ENCODE measurements at regions of chr7 and their contacts with region 1.

Region 1: GRCh38 chr7:87152107-87152844 is at the start of gene DMTF1:
- DNase-seq: peak; percentile 88
- H3K4me3 Mint-ChIP-seq: peak within 1 kb of the TSS; percentile 94
- H3K27ac Mint-ChIP-seq: peak within 1 kb of the TSS; percentile 93
- H3K4me1 Mint-ChIP-seq: peaks cover 43% of the 10 kb centered on the region
- H3K27me3 Mint-ChIP-seq: no peaks in the 10 kb centered on the region
- total RNA-seq, gene DMTF1: 95.3 to 97.8 TPM

Region 2: GRCh38 chr7:86889501-86889900 is 262.8 kb before region 1 on chr7:
- CTCF ChIA-PET with region 1: no interaction called
- POLR2A ChIA-PET with region 1: no interaction called
- DNase-seq: no peak
- H3K4me3 Mint-ChIP-seq: no peak overlapping the region
- H3K27ac Mint-ChIP-seq: no peak overlapping the region
- H3K4me1 Mint-ChIP-seq: no peaks in the 10 kb centered on the region
- H3K27me3 Mint-ChIP-seq: no peaks in the 10 kb centered on the region

Region 3: DNA sequence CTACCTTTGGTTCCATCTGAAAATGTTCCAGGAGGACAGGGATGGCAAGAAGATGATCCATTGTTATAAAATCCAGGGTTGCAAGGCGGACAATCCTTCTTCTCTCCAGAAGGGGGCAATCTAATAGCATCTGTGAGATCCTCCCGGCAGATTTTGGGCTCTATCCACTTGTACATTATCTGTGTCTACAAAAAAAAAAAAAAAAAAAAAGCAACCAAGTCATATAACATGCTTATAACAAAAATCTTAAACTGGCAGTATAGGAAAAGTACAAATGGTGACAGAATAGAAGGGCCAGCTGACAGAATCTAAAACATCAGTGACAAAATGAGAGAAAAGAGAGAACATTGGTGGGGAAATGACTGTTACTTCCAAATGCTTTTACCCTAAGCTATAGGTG is 225.5 kb before region 1 on chr7:
- CTCF ChIA-PET with region 1: interaction called, 63 read pairs
- POLR2A ChIA-PET with region 1: no interaction called
- DNase-seq: no peak
- H3K4me3 Mint-ChIP-seq: no peak overlapping the region
- H3K27ac Mint-ChIP-seq: no peak overlapping the region
- H3K4me1 Mint-ChIP-seq: no peaks in the 10 kb centered on the region
- H3K27me3 Mint-ChIP-seq: peaks cover 10% of the 10 kb centered on the region

Region 4: GRCh38 chr7:87059525-87060287 is 92.6 kb before region 1 on chr7 and contains the start of gene ELAPOR2:
- CTCF ChIA-PET with region 1: interaction called, 8 read pairs
- POLR2A ChIA-PET with region 1: interaction called, 16 read pairs
- DNase-seq: peak; percentile 76
- H3K4me3 Mint-ChIP-seq: peak within 1 kb of the TSS; percentile 72
- H3K27ac Mint-ChIP-seq: peak within 1 kb of the TSS; percentile 16
- H3K4me1 Mint-ChIP-seq: peaks cover 16% of the 10 kb centered on the region
- H3K27me3 Mint-ChIP-seq: peaks cover 13% of the 10 kb centered on the region
- total RNA-seq, gene ELAPOR2: 2.5 to 3.9 TPM

Region 5: DNA sequence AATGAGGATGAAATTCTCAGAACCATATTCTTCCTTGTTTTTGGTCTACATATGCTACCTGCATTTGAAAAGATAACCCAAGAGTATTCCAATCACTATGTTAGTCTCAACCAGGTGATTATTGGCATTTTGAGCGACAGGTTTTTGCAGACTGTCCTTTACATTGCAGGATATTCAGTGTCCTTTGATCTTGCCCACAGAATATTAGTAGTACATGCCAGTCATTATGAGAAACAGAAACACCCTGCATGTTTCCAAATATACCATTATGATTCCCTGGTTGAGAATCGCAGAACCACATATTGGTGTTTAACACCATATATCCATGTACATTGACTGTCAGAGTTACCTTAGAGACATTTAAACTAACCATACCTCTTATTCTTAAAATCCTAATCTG is 36.7 kb after region 1 on chr7:
- CTCF ChIA-PET with region 1: no interaction called
- POLR2A ChIA-PET with region 1: interaction called, 20 read pairs
- DNase-seq: no peak
- H3K4me3 Mint-ChIP-seq: no peak overlapping the region
- H3K27ac Mint-ChIP-seq: no peak overlapping the region
- H3K4me1 Mint-ChIP-seq: peaks cover 15% of the 10 kb centered on the region
- H3K27me3 Mint-ChIP-seq: no peaks in the 10 kb centered on the region

Region 6: GRCh38 chr7:87219545-87220025 is 67.3 kb after region 1 on chr7 and contains the start of gene TMEM243:
- CTCF ChIA-PET with region 1: interaction called, 23 read pairs
- POLR2A ChIA-PET with region 1: interaction called, 337 read pairs
- DNase-seq: peak; percentile 86
- H3K4me3 Mint-ChIP-seq: peak within 1 kb of the TSS; percentile 99
- H3K27ac Mint-ChIP-seq: peak within 1 kb of the TSS; percentile 95
- H3K4me1 Mint-ChIP-seq: peaks cover 36% of the 10 kb centered on the region
- H3K27me3 Mint-ChIP-seq: peaks cover 9% of the 10 kb centered on the region
- total RNA-seq, gene TMEM243: 42.1 to 42.5 TPM